ENCODE measurements at regions of chr6 and their contacts with region 1.

Region 1: GRCh38 chr6:15691250-15691869 is 28.5 kb upstream of the DTNBP1 start:
- DNase-seq: peak; percentile 73
- H3K4me3 Mint-ChIP-seq: peak overlapping the region; percentile 60
- H3K27ac Mint-ChIP-seq: peak overlapping the region; percentile 31
- H3K4me1 Mint-ChIP-seq: peaks cover 9% of the 10 kb centered on the region
- H3K27me3 Mint-ChIP-seq: no peaks in the 10 kb centered on the region
- CTCF ChIP-seq: peak; percentile 85

Region 2: GRCh38 chr6:15577550-15578171 is 113.7 kb before region 1 on chr6:
- CTCF ChIA-PET with region 1: no interaction called
- intact Hi-C with region 1: no loop called
- DNase-seq: no peak
- H3K4me3 Mint-ChIP-seq: no peak overlapping the region
- H3K27ac Mint-ChIP-seq: no peak overlapping the region
- H3K4me1 Mint-ChIP-seq: peaks cover 10% of the 10 kb centered on the region
- H3K27me3 Mint-ChIP-seq: no peaks in the 10 kb centered on the region
- CTCF ChIP-seq: no peak

Region 3: DNA sequence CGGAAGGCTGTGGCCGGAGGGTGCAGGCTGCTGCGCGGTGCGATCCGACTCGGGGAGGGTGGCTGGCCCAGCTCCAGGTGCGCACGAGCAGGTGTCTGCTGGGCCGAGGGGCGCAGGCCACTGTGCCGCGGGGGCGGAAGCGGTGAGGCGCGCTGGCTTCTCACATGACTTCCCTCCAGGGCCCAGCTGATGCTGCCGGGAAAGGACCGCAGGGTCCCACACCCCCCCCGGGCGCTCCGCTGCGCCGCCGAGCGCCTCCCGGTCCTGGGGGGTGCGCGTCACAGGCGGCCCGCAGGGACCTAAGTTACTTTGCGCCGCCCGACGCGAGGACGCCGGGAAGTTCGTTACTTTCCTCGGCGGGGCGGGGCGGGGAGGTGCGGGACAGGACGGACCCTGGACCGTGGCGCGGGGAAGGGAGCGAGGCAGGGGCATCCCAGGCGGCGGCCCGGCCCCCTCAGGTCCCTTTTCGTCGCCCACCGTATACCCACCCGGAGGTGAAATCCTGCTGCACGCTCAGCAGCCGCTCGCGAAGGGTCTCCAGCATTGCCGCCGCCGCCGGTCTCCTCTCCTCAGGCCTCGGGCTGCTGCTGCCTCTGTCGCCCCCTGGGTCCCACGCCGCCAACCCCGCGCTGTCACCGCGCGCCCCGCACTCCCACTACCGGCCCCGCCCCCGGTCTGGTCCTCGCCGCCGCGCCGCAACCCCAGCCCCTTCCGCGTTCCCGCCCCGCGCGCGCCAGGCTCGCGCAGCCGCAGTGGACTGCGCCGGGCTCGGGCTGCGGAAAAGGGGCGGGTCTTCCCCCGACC is 28.8 kb before region 1 on chr6 and contains the start of gene DTNBP1:
- CTCF ChIA-PET with region 1: no interaction called
- intact Hi-C with region 1: no loop called
- DNase-seq: peak; percentile 82
- H3K4me3 Mint-ChIP-seq: peak within 1 kb of the TSS; percentile 71
- H3K27ac Mint-ChIP-seq: no peak within 1 kb of the TSS
- H3K4me1 Mint-ChIP-seq: peaks cover 10% of the 10 kb centered on the region
- H3K27me3 Mint-ChIP-seq: peaks cover 21% of the 10 kb centered on the region
- CTCF ChIP-seq: no peak
- total RNA-seq, gene DTNBP1: 10.0 and 12.8 TPM in 2 replicates

Region 4: GRCh38 chr6:15793288-15793687 is 101.9 kb after region 1 on chr6:
- CTCF ChIA-PET with region 1: no interaction called
- intact Hi-C with region 1: loop called (anchors 10 kb)
- DNase-seq: peak; percentile 11
- H3K4me3 Mint-ChIP-seq: no peak overlapping the region
- H3K27ac Mint-ChIP-seq: no peak overlapping the region
- H3K4me1 Mint-ChIP-seq: peaks cover 39% of the 10 kb centered on the region
- H3K27me3 Mint-ChIP-seq: no peaks in the 10 kb centered on the region
- CTCF ChIP-seq: no peak

Region 5: DNA sequence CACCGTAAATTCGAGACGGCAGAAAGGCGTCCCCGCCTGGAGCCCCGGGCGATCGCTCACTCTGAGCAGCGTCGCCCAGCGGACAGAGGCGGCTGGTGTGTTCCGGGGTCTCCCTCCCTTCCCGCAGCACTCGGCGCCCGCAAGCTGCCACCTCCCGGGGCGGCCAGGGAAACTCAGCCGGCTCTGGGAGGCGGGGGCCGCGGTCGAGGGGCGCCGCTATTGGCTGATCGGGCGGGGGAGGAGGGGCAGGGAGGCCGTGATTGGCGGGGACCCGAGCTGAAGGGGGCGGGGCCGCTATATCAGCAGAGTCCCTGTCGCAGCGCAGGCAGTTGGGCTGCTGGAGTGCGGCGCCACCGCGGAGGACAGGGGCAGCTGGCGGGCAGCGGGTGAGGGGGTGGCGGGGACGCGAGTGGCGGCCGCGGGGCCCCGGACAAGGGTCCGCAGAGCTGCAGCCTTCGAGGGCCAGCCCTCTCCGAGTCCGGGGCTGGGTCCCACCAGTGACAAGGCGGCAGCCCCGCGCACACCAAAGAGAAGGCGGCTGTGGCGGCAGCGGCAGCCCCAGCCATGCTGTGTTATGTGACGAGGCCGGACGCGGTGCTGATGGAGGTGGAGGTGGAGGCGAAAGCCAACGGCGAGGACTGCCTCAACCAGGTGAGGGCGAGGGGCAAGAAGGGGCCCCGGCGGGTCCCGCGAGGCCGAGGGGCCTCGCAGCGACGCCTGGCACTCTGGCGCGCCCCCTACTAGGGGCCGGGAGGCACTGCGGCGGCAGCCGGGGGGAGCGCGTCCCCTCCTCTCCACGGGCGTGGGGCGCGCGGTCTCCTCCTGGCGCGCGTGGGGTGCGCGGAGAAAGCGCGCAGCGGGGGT is 437.6 kb after region 1 on chr6 and contains the start of gene MYLIP:
- CTCF ChIA-PET with region 1: interaction called, 16 read pairs
- intact Hi-C with region 1: loop called (anchors 2 kb)
- DNase-seq: peak; percentile 95
- H3K4me3 Mint-ChIP-seq: peak within 1 kb of the TSS; percentile 90
- H3K27ac Mint-ChIP-seq: peak within 1 kb of the TSS; percentile 58
- H3K4me1 Mint-ChIP-seq: no peaks in the 10 kb centered on the region
- H3K27me3 Mint-ChIP-seq: peaks cover 16% of the 10 kb centered on the region
- CTCF ChIP-seq: peak; percentile 59
- total RNA-seq, gene MYLIP: 8.1 and 10.1 TPM in 2 replicates

Region 6: GRCh38 chr6:16183187-16183664 is 491.9 kb after region 1 on chr6:
- CTCF ChIA-PET with region 1: interaction called, 21 read pairs
- intact Hi-C with region 1: loop called (anchors 2 kb)
- DNase-seq: no peak
- H3K4me3 Mint-ChIP-seq: no peak overlapping the region
- H3K27ac Mint-ChIP-seq: no peak overlapping the region
- H3K4me1 Mint-ChIP-seq: peaks cover 7% of the 10 kb centered on the region
- H3K27me3 Mint-ChIP-seq: no peaks in the 10 kb centered on the region
- CTCF ChIP-seq: no peak

Region 7: DNA sequence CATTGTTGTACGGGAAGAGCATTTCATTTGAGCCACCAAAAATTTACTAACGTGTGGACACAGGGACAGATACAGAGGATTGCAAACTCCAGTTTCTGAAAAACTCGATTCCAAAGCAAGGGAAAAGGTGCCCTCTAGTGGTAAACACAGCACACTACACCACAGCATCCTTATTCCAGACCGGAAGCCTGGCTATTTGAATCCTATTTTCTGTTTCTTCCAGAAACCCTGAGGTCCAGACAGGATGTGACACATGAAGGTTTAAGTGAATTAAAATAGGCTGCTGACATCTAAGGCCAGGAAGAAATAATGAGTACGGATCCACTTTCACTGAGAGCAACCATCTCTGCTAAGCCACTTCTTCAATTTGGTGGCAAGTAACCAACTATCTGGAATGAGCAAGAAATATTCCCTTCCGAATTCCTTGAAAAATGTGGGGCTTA is 515.3 kb after region 1 on chr6:
- CTCF ChIA-PET with region 1: interaction called, 4 read pairs
- intact Hi-C with region 1: loop called (anchors 2 kb)
- DNase-seq: peak; percentile 45
- H3K4me3 Mint-ChIP-seq: no peak overlapping the region
- H3K27ac Mint-ChIP-seq: no peak overlapping the region
- H3K4me1 Mint-ChIP-seq: peaks cover 9% of the 10 kb centered on the region
- H3K27me3 Mint-ChIP-seq: no peaks in the 10 kb centered on the region
- CTCF ChIP-seq: peak; percentile 65